Activated CD4-positive, alpha-beta T cell treated with anti-CD3 and anti-CD28 coated beads for 36 hours (primary cell): ENCODE measurements at regions of chr19 and their contacts with region 1.

Region 1: DNA sequence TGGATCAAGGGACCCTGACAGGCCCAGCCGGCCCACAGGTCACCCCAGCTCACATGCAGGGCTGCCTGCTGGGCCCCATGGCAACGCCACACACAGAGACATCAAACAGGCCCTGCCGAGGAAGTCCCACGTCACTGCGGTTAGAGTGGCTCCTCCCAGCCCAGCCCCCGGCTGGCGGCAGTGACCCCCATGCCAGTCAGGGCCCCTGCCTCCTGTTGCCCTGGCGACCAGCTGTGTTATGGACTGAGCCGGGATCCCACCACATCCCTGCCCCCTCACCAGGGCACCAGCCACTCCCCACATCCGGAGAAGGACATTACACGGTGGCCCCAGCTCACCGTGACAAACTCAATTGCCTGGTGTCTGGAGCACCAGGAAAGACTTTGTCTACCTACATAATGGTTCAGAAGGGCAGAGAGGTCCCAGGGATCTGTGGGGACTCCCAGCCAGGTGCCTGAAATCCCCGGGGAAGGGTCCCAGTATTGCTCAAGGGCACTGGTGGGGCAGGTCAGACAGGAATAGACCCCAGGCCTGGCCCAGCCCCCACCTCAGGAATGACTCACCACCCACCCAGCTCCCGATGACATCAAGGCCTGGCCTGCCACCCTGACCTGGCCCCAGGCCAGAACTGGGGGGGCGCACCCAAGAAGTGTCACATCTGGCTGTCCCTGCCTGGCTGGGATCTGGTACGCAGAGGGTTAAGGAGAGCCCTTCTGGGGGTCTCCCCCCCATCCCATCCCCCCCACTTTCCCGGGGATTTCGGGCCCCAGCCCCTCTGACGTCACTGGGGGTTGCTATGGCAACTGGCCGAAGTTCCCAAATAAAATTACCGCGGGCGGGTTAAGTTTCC is 30.2 kb upstream of the NANOS3 start:
- DNase-seq: peak; percentile 97
- ATAC-seq: peak; percentile 69
- H3K4me3 Mint-ChIP-seq: peak overlapping the region; percentile 71
- H3K27ac Mint-ChIP-seq: peak overlapping the region; percentile 97
- H3K4me1 Mint-ChIP-seq: peaks cover 56% of the 10 kb centered on the region
- H3K27me3 Mint-ChIP-seq: no peaks in the 10 kb centered on the region

Region 2: GRCh38 chr19:13731147-13731964 is 115.4 kb before region 1 on chr19:
- CTCF ChIA-PET with region 1: no interaction called
- POLR2A ChIA-PET with region 1: no interaction called
- intact Hi-C with region 1: loop called in 1 of 2 experiments (anchors 2 kb)
- DNase-seq: peak; percentile 97
- ATAC-seq: peak; percentile 99
- H3K4me3 Mint-ChIP-seq: peak overlapping the region; percentile 87
- H3K27ac Mint-ChIP-seq: peak overlapping the region; percentile 94
- H3K4me1 Mint-ChIP-seq: peaks cover 25% of the 10 kb centered on the region
- H3K27me3 Mint-ChIP-seq: no peaks in the 10 kb centered on the region

Region 3: GRCh38 chr19:13794757-13795589 is 51.8 kb before region 1 on chr19 and contains the start of gene ZSWIM4:
- CTCF ChIA-PET with region 1: no interaction called
- POLR2A ChIA-PET with region 1: no interaction called
- intact Hi-C with region 1: loop called in 1 of 2 experiments (anchors 1 kb)
- DNase-seq: peak; percentile 98
- ATAC-seq: peak; percentile 99
- H3K4me3 Mint-ChIP-seq: peak within 1 kb of the TSS; percentile 96
- H3K27ac Mint-ChIP-seq: peak within 1 kb of the TSS; percentile 94
- H3K4me1 Mint-ChIP-seq: peaks cover 24% of the 10 kb centered on the region
- H3K27me3 Mint-ChIP-seq: no peaks in the 10 kb centered on the region
- total RNA-seq, gene ZSWIM4: 5.6 to 5.8 TPM

Region 4: DNA sequence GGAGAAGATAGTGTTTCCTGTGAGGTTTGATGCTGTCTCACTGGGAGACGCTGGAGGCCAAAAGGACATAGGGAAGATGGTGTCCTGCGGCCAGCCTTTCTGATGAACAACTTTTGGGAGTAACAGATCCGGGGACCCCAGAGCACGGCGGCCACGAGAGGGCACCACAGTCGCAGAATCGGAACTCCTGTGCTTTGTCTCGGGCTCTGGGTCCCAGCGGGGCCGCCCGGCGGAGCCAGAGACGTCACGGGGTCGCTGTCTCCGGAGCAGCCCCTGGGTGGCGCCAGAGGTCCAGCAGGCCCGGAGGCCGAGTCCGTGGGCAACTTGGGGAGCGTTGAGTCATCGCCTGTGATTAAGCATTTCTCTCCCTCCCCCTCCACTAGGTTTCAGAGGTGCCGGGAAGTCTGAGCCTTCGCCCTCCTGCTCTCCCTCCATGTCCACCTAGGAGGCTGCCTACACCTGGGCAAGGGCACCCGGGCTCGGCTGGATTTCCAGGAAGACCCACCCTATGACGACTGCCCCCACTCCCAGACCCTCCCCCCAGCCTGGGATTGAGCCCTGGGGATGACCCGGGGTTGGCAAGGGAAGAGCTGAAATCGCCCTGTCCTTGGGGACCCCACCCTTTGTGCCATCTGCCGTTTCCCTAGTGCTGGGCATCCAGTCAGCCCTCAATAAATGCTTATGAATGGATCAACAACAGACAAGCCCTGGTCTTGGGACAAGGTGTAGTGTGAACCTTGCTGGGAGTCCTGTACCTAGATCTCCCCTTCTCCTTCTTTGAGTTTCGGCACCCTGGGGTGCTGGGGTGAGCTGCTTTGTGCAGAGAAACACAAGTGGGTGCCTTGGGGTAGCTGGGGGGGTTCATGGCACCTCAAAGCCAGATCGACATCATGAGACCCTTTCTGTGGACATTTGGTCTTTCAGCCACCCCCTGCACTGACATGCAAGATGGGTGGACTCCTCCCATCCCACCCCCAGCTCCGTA is 33.6 kb after region 1 on chr19:
- CTCF ChIA-PET with region 1: no interaction called
- POLR2A ChIA-PET with region 1: no interaction called
- intact Hi-C with region 1: no loop called
- DNase-seq: peak; percentile 99
- ATAC-seq: peak; percentile 94
- H3K4me3 Mint-ChIP-seq: peak overlapping the region; percentile 49
- H3K27ac Mint-ChIP-seq: peak overlapping the region; percentile 85
- H3K4me1 Mint-ChIP-seq: peaks cover 35% of the 10 kb centered on the region
- H3K27me3 Mint-ChIP-seq: no peaks in the 10 kb centered on the region

Region 5: DNA sequence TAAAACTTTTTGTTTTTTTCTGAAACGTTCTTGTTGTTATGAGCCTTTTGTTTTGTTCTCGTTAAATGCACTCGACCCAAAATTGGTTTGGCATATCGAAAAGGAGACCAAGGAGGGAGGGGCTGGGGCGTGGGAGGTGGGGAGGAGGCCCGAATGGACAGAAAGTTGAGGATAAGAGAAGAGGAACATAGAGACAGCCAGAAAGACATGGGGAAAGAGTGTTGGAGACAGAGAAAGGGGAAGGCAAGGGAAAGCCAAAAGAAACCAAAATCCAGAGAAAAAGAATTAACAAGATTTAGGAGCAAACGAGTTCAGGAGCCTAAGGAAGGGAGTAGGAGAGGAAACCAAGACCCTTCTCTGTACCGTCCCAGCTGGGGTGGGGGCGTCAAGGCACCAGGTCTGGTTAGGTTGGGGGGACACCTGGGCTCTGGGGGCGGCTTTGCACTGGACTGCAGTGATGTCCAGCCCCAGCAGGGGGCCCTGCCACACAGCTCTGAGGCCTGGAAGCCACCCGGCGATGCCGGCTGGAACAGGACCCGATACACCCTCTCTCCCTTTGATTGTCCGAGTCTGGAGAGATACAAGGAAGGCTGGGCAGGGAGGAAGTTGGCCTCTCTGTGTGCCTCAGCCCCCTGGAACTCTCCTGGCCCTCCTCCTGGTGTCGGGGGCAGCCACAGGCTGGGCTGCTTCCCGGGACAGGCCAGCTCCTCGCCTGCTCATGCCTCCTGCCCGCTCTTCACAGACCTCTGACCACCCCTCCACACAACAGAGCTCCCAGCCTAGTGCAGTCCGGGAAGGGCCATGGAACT is 301.2 kb after region 1 on chr19:
- CTCF ChIA-PET with region 1: no interaction called
- POLR2A ChIA-PET with region 1: no interaction called
- intact Hi-C with region 1: no loop called
- DNase-seq: peak; percentile 74
- ATAC-seq: peak; percentile 62
- H3K4me3 Mint-ChIP-seq: peak overlapping the region; percentile 4
- H3K27ac Mint-ChIP-seq: peak overlapping the region; percentile 92
- H3K4me1 Mint-ChIP-seq: peaks cover 56% of the 10 kb centered on the region
- H3K27me3 Mint-ChIP-seq: no peaks in the 10 kb centered on the region

Region 6: GRCh38 chr19:14366498-14366915 is 519.7 kb after region 1 on chr19:
- CTCF ChIA-PET with region 1: no interaction called
- POLR2A ChIA-PET with region 1: no interaction called
- intact Hi-C with region 1: loop called in 1 of 2 experiments (anchors 1 kb)
- DNase-seq: peak; percentile 95
- ATAC-seq: peak; percentile 50
- H3K4me3 Mint-ChIP-seq: peak overlapping the region; percentile 45
- H3K27ac Mint-ChIP-seq: peak overlapping the region; percentile 100
- H3K4me1 Mint-ChIP-seq: peaks cover 78% of the 10 kb centered on the region
- H3K27me3 Mint-ChIP-seq: no peaks in the 10 kb centered on the region

Region 7: DNA sequence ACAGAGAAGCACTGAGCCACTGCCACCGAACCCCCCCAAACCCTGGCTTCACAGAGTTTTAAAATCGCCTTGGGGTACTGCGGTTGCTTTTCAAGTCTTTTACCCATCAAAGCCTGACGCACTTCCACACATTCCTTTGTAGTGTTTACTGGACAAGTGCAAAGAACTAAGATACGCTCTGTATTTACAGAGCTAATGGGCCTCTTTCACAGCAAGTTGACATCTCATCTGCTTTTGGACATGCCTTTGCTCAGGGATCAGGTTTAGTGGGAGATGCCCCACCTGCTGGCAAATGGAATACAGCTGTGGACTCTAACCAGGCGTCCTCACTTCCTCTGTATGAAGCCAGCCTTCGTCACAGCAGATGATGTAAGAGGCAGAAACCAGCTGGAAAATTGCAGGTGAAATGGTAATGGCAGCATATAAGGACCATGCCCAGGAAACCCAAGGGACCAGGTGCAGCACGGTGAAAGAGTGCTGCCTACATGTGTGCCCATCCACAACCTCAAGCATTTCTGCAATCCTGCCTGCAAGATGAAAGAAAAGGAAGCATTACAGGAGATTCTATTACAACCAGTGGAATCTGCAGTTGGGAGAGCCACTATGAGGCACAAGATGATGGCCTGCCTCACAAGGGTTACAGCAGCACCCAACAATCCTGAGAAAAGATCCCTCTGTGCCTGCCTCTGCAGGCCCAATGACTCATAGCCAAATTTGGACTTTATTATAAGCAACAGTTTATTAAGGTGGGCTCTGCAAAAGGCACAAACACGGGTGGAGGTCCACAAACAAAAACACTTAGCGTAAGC is 1450.8 kb after region 1 on chr19:
- CTCF ChIA-PET with region 1: no interaction called
- POLR2A ChIA-PET with region 1: no interaction called
- intact Hi-C with region 1: loop called in 1 of 2 experiments (anchors 5 kb)
- DNase-seq: peak; percentile 55
- ATAC-seq: no peak
- H3K4me3 Mint-ChIP-seq: peak overlapping the region; percentile 30
- H3K27ac Mint-ChIP-seq: peak overlapping the region; percentile 91
- H3K4me1 Mint-ChIP-seq: peaks cover 97% of the 10 kb centered on the region
- H3K27me3 Mint-ChIP-seq: no peaks in the 10 kb centered on the region